Activated T-helper 2 cell treated with anti-CD3 and anti-CD28 coated beads, Interferon-gamma antibody, Interleukin-2, Interleukin-4, amounts not matched to agents 10 μg/mL and 5 μg/mL and 100 μg/mL, durations not matched to agents 14 hours and 24 hours and 36 hours (primary cell): ENCODE measurements at regions of chr6 and their contacts with region 1.

Region 1: DNA sequence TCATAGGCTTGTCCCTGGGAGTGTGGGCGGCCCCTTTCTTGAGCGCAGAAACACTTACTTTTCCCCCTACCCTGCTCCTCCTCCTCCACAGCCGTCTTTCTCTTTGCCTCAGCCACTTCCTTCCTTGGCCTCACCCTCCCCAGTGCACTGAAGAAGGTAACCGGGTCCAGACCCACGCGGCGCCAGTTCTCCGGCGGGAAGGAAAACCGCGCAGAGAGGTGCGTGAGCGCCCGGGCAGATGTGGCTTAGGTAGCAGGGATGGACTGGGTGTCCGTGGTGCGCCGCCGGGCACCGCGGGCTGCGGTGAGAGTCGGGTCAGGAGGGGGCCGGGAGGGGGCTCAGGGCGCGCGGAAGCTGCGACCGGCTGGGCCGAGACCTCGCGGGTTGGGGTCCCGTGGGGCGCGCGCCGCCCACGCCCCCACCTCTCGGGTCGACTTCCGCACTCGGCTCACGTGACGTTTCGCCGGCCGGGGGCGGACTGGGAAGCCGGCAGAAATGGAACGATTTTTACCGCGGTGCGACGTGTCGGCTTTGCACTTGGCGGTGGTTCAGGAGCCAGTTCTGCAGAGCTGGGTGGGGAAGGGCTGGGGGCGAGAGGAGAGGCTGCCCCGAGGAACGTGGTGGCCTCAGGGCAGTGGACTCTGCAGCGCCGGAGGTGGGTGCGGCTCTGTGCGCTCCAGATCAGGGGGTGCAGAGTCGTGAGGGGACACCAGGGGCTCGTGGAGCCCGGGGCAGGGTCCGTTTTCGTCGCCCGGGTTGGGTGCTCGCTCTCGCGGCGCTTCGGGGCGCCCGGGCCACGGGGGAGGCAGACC is at the start of gene ABRACL:
- DNase-seq: peak; percentile 77
- H3K4me3 Mint-ChIP-seq: peak within 1 kb of the TSS; percentile 93
- H3K27ac Mint-ChIP-seq: peak within 1 kb of the TSS; percentile 89
- H3K4me1 Mint-ChIP-seq: peaks cover 17% of the 10 kb centered on the region
- H3K27me3 Mint-ChIP-seq: no peaks in the 10 kb centered on the region
- total RNA-seq, gene ABRACL: 151 and 161 TPM in 2 replicates

Region 2: DNA sequence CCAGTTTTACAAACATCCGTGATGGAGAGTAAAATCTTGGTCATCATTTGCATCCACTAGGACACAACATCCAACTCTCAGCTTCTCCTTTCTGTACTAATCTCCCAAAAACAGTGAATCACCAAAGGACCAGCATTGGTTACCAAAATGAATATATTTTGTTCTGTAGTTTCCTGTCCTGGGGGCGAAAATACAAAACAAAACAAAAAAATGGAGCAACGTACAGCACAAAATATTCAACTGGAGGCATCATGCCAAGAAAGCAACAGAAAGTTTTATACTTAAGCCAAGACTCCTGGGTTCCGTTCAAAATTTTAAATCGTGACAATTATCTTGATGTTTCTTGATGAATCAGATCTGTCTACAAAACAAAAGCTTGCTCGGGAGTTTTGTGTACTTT is 381.9 kb before region 1 on chr6:
- intact Hi-C with region 1: no loop called
- DNase-seq: no peak
- H3K4me3 Mint-ChIP-seq: no peak overlapping the region
- H3K27ac Mint-ChIP-seq: no peak overlapping the region
- H3K4me1 Mint-ChIP-seq: no peaks in the 10 kb centered on the region
- H3K27me3 Mint-ChIP-seq: peaks cover 4% of the 10 kb centered on the region

Region 3: GRCh38 chr6:138944412-138944811 is 84.5 kb before region 1 on chr6:
- intact Hi-C with region 1: loop called (anchors 2 kb)
- DNase-seq: no peak
- H3K4me3 Mint-ChIP-seq: no peak overlapping the region
- H3K27ac Mint-ChIP-seq: no peak overlapping the region
- H3K4me1 Mint-ChIP-seq: peaks cover 46% of the 10 kb centered on the region
- H3K27me3 Mint-ChIP-seq: no peaks in the 10 kb centered on the region

Region 4: GRCh38 chr6:138970856-138971425 is 57.9 kb before region 1 on chr6:
- intact Hi-C with region 1: no loop called
- DNase-seq: no peak
- H3K4me3 Mint-ChIP-seq: no peak overlapping the region
- H3K27ac Mint-ChIP-seq: peak overlapping the region; percentile 5
- H3K4me1 Mint-ChIP-seq: peaks cover 40% of the 10 kb centered on the region
- H3K27me3 Mint-ChIP-seq: no peaks in the 10 kb centered on the region

Region 5: DNA sequence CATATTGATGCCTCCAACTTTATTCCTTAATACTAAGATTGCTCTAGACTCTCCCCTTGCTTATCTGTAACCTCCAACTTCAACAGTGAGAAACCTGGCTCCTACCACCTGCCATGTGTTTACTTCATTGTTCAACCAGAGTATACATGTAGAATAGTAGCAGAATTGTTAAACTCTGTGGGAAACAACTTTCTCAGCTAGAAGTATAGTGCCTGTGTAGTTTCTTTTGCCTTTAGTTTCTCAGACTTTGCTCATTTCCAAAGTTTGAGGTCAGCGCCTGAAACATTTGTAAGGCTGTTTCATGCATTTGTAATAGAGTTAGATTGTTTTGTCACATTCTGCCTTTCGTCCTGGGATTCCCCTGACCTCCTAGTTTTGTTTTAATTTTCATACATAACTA is 71.1 kb after region 1 on chr6:
- intact Hi-C with region 1: loop called (anchors 2 kb)
- DNase-seq: no peak
- H3K4me3 Mint-ChIP-seq: no peak overlapping the region
- H3K27ac Mint-ChIP-seq: peak overlapping the region; percentile 43
- H3K4me1 Mint-ChIP-seq: peaks cover 16% of the 10 kb centered on the region
- H3K27me3 Mint-ChIP-seq: no peaks in the 10 kb centered on the region

Region 6: DNA sequence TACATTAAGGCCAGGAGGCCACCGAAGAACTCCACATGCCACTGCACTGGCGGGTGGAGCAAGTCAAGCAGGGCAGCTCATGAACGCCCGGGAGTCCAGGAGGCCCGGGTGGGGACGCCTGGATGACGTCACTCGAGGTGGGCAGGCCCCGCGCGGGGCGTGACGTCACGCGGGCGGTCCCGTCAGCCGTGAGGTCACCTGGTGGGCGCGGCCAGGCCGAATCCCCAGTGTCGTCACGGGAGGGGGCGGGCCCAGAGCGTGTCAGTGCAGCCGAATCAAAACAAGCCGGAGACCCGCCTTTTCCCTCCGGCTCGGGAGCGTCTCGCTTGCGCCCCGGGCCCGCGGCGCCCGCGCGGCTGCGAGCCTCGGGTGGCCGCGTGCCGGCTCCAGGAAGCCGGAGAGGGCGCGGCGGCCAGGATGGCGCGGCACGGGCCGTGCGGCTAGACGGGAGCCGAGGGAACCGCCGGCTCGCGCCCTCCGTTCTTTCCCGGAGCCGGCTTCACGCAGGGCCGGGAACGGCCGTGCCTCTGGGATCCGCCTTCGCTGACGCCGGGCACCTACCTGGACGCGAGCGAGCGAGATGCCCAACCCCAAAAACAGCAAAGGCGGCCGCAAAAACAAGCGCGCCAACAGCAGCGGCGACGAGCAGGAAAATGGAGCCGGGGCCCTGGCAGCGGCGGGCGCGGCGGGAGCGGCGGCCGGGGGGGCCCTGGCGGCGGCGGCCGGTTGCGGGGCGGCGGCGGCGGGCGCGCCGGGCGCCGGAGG is 106.1 kb after region 1 on chr6 and contains the start of gene HECA:
- intact Hi-C with region 1: loop called (anchors 2 kb)
- DNase-seq: peak; percentile 96
- H3K4me3 Mint-ChIP-seq: peak within 1 kb of the TSS; percentile 81
- H3K27ac Mint-ChIP-seq: peak within 1 kb of the TSS; percentile 85
- H3K4me1 Mint-ChIP-seq: peaks cover 60% of the 10 kb centered on the region
- H3K27me3 Mint-ChIP-seq: no peaks in the 10 kb centered on the region
- total RNA-seq, gene HECA: 33.6 and 36.9 TPM in 2 replicates

Region 7: GRCh38 chr6:139743664-139744437 is 715.0 kb after region 1 on chr6:
- intact Hi-C with region 1: no loop called
- DNase-seq: no peak
- H3K4me3 Mint-ChIP-seq: no peak overlapping the region
- H3K27ac Mint-ChIP-seq: no peak overlapping the region
- H3K4me1 Mint-ChIP-seq: no peaks in the 10 kb centered on the region
- H3K27me3 Mint-ChIP-seq: peaks cover 12% of the 10 kb centered on the region